PC-3 (cell line): ENCODE measurements at regions of chr1 and their contacts with region 1.

Region 1: GRCh38 chr1:180515864-180516388 is 13.5 kb upstream of the ACBD6 start:
- DNase-seq: peak; percentile 72
- ATAC-seq: peak; percentile 90
- H3K4me3 ChIP-seq: no peak overlapping the region
- H3K27ac ChIP-seq: no peak overlapping the region
- H3K4me1 ChIP-seq: 0 out of 2 replicates have a peak, but pooled peaks cover 2% of the 10 kb centered on the region
- H3K27me3 ChIP-seq: no peaks in the 10 kb centered on the region
- CTCF ChIP-seq: peak; percentile 70

Region 2: GRCh38 chr1:180301135-180301742 is 214.7 kb before region 1 on chr1:
- CTCF ChIA-PET with region 1: no interaction called
- POLR2A ChIA-PET with region 1: no interaction called
- intact Hi-C with region 1: no loop called
- DNase-seq: peak; percentile 25
- ATAC-seq: peak; percentile 70
- H3K4me3 ChIP-seq: no peak overlapping the region
- H3K27ac ChIP-seq: no peak overlapping the region
- H3K4me1 ChIP-seq: peaks cover 4% of the 10 kb centered on the region; the same call in 1 of the 2 replicates
- H3K27me3 ChIP-seq: no peaks in the 10 kb centered on the region
- CTCF ChIP-seq: no peak

Region 3: DNA sequence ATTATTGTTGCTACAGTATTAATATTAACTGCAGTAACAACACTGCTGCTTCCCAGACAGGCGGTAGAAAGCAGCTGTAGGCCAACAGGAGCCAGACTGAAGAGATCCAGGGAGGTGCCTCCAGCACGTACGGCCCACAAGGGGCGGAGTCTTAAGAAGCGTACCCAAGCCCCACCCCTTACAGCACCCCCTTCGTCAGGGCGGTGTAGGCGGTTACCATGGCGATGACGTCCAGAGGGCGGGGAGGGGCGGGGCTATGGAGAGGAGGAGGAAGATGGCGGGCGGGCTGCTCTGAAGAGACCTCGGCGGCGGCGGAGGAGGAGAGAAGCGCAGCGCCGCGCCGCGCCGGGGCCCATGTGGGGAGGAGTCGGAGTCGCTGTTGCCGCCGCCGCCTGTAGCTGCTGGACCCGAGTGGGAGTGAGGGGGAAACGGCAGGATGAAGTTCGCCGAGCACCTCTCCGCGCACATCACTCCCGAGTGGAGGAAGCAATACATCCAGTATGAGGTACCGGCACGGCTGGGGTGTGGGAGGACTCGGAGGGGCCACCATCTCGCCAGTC is 115.9 kb after region 1 on chr1 and contains the start of gene XPR1:
- CTCF ChIA-PET with region 1: no interaction called
- POLR2A ChIA-PET with region 1: no interaction called
- intact Hi-C with region 1: loop called (anchors 2 kb)
- DNase-seq: peak; percentile 94
- ATAC-seq: peak; percentile 99
- H3K4me3 ChIP-seq: peak within 1 kb of the TSS; percentile 70
- H3K27ac ChIP-seq: no peak within 1 kb of the TSS
- H3K4me1 ChIP-seq: peaks cover 4% of the 10 kb centered on the region; the same call in 1 of the 2 replicates
- H3K27me3 ChIP-seq: no peaks in the 10 kb centered on the region
- CTCF ChIP-seq: no peak
- total RNA-seq, gene XPR1: 7.3 and 8.2 TPM in 2 replicates

Region 4: GRCh38 chr1:180791806-180792205 is 275.9 kb after region 1 on chr1:
- CTCF ChIA-PET with region 1: no interaction called
- POLR2A ChIA-PET with region 1: no interaction called
- intact Hi-C with region 1: loop called (anchors 5 kb)
- DNase-seq: peak; percentile 67
- ATAC-seq: peak; percentile 84
- H3K4me3 ChIP-seq: no peak overlapping the region
- H3K27ac ChIP-seq: peak overlapping the region; percentile 16; the same call in 1 of the 2 replicates
- H3K4me1 ChIP-seq: peaks cover 13% of the 10 kb centered on the region
- H3K27me3 ChIP-seq: no peaks in the 10 kb centered on the region
- CTCF ChIP-seq: no peak

Region 5: DNA sequence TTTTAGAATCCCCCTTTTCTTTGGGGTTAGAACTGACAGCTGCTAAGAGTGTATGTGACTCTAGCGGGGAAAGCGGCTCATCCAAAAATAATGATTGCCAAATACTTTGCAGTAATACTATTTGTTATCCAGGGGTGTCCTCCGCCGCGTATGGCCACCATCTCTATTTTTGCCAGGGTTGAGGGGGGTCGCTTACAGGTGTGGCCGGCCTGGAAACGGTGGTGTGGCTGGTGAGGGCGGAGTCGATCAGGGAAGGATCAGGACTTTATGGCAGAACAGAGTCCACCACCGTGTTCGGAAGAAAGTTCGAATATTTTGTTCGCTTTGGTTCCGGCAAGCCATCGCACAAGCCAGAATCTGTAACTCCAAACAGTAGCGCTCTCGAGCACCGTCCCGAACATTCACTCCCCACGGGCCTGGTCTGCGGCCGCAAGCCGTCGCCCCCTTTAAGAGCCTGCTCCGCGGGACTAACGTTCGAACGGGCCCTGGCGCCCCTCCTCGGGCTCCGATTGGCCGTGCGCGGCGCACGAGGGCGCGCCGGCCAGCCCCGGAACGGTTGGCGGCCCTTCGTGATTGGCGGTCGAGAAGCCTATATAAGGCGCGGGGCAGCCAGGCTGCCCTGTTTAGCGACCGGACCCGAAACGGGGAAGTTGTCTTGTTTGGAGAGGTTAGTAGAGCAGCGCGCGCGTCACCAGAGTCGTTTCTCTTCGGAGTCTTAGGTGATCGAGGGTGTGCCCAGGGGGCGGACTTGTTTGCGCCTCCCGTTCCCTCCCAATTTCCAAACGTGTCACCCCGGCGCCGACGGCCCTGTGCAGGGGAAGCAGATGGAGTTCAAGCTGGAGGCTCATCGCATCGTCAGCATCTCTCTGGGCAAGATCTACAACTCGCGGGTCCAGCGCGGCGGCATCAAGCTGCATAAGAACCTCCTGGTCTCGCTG is 572.4 kb after region 1 on chr1 and contains the start of gene IER5:
- CTCF ChIA-PET with region 1: no interaction called
- POLR2A ChIA-PET with region 1: no interaction called
- intact Hi-C with region 1: loop called (anchors 5 kb)
- DNase-seq: peak; percentile 95
- ATAC-seq: peak; percentile 72
- H3K4me3 ChIP-seq: peak within 1 kb of the TSS; percentile 99
- H3K27ac ChIP-seq: peak within 1 kb of the TSS; percentile 90
- H3K4me1 ChIP-seq: peaks cover 18% of the 10 kb centered on the region
- H3K27me3 ChIP-seq: no peaks in the 10 kb centered on the region
- CTCF ChIP-seq: no peak
- total RNA-seq, gene IER5: 100 and 126 TPM in 2 replicates

Region 6: GRCh38 chr1:181166377-181167196 is 650.7 kb after region 1 on chr1:
- CTCF ChIA-PET with region 1: no interaction called
- POLR2A ChIA-PET with region 1: no interaction called
- intact Hi-C with region 1: loop called (anchors 10 kb)
- DNase-seq: peak; percentile 80
- ATAC-seq: peak; percentile 99
- H3K4me3 ChIP-seq: no peak overlapping the region
- H3K27ac ChIP-seq: no peak overlapping the region
- H3K4me1 ChIP-seq: no peaks in the 10 kb centered on the region
- H3K27me3 ChIP-seq: no peaks in the 10 kb centered on the region
- CTCF ChIP-seq: peak; percentile 76